ENCODE measurements at regions of chrX and their contacts with region 1.

Region 1: GRCh38 chrX:2498781-2499302 is 1.9 kb downstream of the DHRSX start:
- DNase-seq: peak in 1 of 2 experiments; percentile 50
- H3K4me3 ChIP-seq: peak overlapping the region; percentile 48
- H3K4me3 Mint-ChIP-seq: peak overlapping the region; percentile 74
- H3K27ac Mint-ChIP-seq: peak overlapping the region; percentile 89
- H3K4me1 ChIP-seq: peaks cover 28% of the 10 kb centered on the region
- H3K4me1 Mint-ChIP-seq: no peaks in the 10 kb centered on the region
- H3K27me3 ChIP-seq: no peaks in the 10 kb centered on the region
- H3K27me3 Mint-ChIP-seq: no peaks in the 10 kb centered on the region
- CTCF ChIP-seq: no peak

Region 2: GRCh38 chrX:2320580-2321327 is 178.1 kb before region 1 on chrX:
- CTCF ChIA-PET with region 1: no interaction called
- POLR2A ChIA-PET with region 1: no interaction called
- intact Hi-C with region 1: loop called (anchors 5 kb)
- DNase-seq: peak; percentile 61 to 76
- H3K4me3 ChIP-seq: no peak overlapping the region
- H3K4me3 Mint-ChIP-seq: no peak overlapping the region
- H3K27ac Mint-ChIP-seq: no peak overlapping the region
- H3K4me1 ChIP-seq: peaks cover 8% of the 10 kb centered on the region; the same call in 1 of the 2 replicates
- H3K4me1 Mint-ChIP-seq: peaks cover 17% of the 10 kb centered on the region
- H3K27me3 ChIP-seq: no peaks in the 10 kb centered on the region
- H3K27me3 Mint-ChIP-seq: no peaks in the 10 kb centered on the region
- CTCF ChIP-seq: no peak

Region 3: GRCh38 chrX:2391869-2392606 is 106.8 kb before region 1 on chrX:
- CTCF ChIA-PET with region 1: no interaction called
- POLR2A ChIA-PET with region 1: no interaction called
- intact Hi-C with region 1: loop called (anchors 5 kb)
- DNase-seq: peak; percentile 79 to 87
- H3K4me3 ChIP-seq: no peak overlapping the region
- H3K4me3 Mint-ChIP-seq: no peak overlapping the region
- H3K27ac Mint-ChIP-seq: no peak overlapping the region
- H3K4me1 ChIP-seq: 0 out of 2 replicates have a peak, but pooled peaks cover 3% of the 10 kb centered on the region
- H3K4me1 Mint-ChIP-seq: peaks cover 7% of the 10 kb centered on the region
- H3K27me3 ChIP-seq: no peaks in the 10 kb centered on the region
- H3K27me3 Mint-ChIP-seq: no peaks in the 10 kb centered on the region
- CTCF ChIP-seq: no peak

Region 4: GRCh38 chrX:2514131-2514530 is 15.3 kb after region 1 on chrX:
- CTCF ChIA-PET with region 1: no interaction called
- POLR2A ChIA-PET with region 1: no interaction called
- intact Hi-C with region 1: loop called (anchors 1 kb)
- DNase-seq: no peak
- H3K4me3 ChIP-seq: no peak overlapping the region
- H3K4me3 Mint-ChIP-seq: no peak overlapping the region
- H3K27ac Mint-ChIP-seq: peak overlapping the region; percentile 88
- H3K4me1 ChIP-seq: peaks cover 41% of the 10 kb centered on the region
- H3K4me1 Mint-ChIP-seq: peaks cover 22% of the 10 kb centered on the region
- H3K27me3 ChIP-seq: no peaks in the 10 kb centered on the region
- H3K27me3 Mint-ChIP-seq: no peaks in the 10 kb centered on the region
- CTCF ChIP-seq: no peak

Region 5: GRCh38 chrX:2595258-2595657 is 96.4 kb after region 1 on chrX:
- CTCF ChIA-PET with region 1: no interaction called
- POLR2A ChIA-PET with region 1: no interaction called
- intact Hi-C with region 1: loop called (anchors 1 kb)
- DNase-seq: no peak
- H3K4me3 ChIP-seq: no peak overlapping the region
- H3K4me3 Mint-ChIP-seq: no peak overlapping the region
- H3K27ac Mint-ChIP-seq: no peak overlapping the region
- H3K4me1 ChIP-seq: peaks cover 31% of the 10 kb centered on the region
- H3K4me1 Mint-ChIP-seq: peaks cover 16% of the 10 kb centered on the region
- H3K27me3 ChIP-seq: no peaks in the 10 kb centered on the region
- H3K27me3 Mint-ChIP-seq: no peaks in the 10 kb centered on the region
- CTCF ChIP-seq: no peak

Region 6: GRCh38 chrX:2608638-2609430 is 110.0 kb after region 1 on chrX:
- CTCF ChIA-PET with region 1: no interaction called
- POLR2A ChIA-PET with region 1: no interaction called
- intact Hi-C with region 1: loop called (anchors 5 kb)
- DNase-seq: peak; percentile 94
- H3K4me3 ChIP-seq: peak overlapping the region; percentile 77
- H3K4me3 Mint-ChIP-seq: peak overlapping the region; percentile 80
- H3K27ac Mint-ChIP-seq: peak overlapping the region; percentile 93
- H3K4me1 ChIP-seq: no peaks in the 10 kb centered on the region
- H3K4me1 Mint-ChIP-seq: peaks cover 23% of the 10 kb centered on the region
- H3K27me3 ChIP-seq: no peaks in the 10 kb centered on the region
- H3K27me3 Mint-ChIP-seq: no peaks in the 10 kb centered on the region
- CTCF ChIP-seq: no peak

Measured in Caco-2 (cell line).